Gastrocnemius medialis (tissue), 4 donors: ENCODE measurements at regions of chr1 and their contacts with region 1.

Region 1: GRCh38 chr1:167066333-167067122 is 23.6 kb downstream of the GPA33 start:
- DNase-seq: peak; percentile 56 to 68
- ATAC-seq: peak; percentile 85 to 96
- H3K4me3 ChIP-seq: peak overlapping the region; percentile 36 to 70 (median 42)
- H3K27ac ChIP-seq: no peak overlapping the region
- H3K4me1 ChIP-seq: peaks cover 0 to 5% of the 10 kb centered on the region in 2 donors
- H3K27me3 ChIP-seq: no peaks in the 10 kb centered on the region
- CTCF ChIP-seq: peak; percentile 93 to 98 (median 96)
- POLR2A ChIP-seq: no peak

Region 2: GRCh38 chr1:167121375-167122120 is 55.0 kb after region 1 on chr1:
- in situ Hi-C with region 1: loop called in 1 of 4 experiments (anchors 10 kb)
- intact Hi-C with region 1: no loop called
- DNase-seq: no peak
- ATAC-seq: no peak
- H3K4me3 ChIP-seq: peak overlapping the region in 1 of 4 donors; percentile 8
- H3K27ac ChIP-seq: peak overlapping the region; percentile 32 to 74 (median 53)
- H3K4me1 ChIP-seq: peaks cover 6 to 20% of the 10 kb centered on the region in 2 donors
- H3K27me3 ChIP-seq: no peaks in the 10 kb centered on the region
- CTCF ChIP-seq: no peak
- POLR2A ChIP-seq: no peak

Region 3: DNA sequence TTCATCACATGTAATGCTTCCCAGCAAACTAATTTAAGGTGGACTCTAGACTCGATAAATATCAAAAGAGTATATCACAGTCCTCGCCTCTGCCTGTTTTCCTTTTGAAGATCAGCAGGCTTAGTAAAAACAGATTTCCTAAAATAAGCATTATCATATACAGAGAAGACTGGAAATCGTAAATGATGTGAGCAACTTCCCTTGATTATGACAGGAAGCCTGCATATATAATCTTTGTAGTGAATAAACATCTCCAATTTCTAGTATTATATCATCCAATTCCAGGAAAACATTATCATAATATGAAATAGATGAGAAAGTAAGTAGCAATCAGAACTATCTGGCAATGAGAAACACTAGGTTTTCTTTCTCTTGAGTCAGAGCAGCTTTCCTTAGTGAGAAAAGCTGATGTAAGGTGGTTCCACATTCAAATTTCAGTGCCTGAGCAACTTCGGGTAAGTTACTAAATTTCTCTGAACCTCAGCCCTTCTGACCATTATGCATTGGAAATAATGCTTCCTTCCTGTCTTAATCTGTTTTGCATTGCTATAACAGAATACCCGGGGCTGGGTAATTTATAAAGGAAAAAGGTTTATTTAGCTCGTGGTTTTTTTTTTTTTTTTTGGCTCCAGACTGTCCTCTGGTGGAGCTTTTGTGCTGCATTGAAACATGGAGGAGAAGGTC is 141.6 kb after region 1 on chr1:
- in situ Hi-C with region 1: loop called (anchors 5 to 10 kb)
- intact Hi-C with region 1: no loop called
- DNase-seq: no peak
- ATAC-seq: peak in 1 of 2 donors; percentile 41
- H3K4me3 ChIP-seq: no peak overlapping the region
- H3K27ac ChIP-seq: no peak overlapping the region
- H3K4me1 ChIP-seq: no peaks in the 10 kb centered on the region
- H3K27me3 ChIP-seq: no peaks in the 10 kb centered on the region
- CTCF ChIP-seq: peak in 3 of 5 experiments; percentile 32 to 39 (median 39)
- POLR2A ChIP-seq: no peak

Region 4: GRCh38 chr1:167442124-167442848 is 375.8 kb after region 1 on chr1:
- in situ Hi-C with region 1: loop called (anchors 5 to 10 kb)
- intact Hi-C with region 1: loop called (anchors 1 kb)
- DNase-seq: peak; percentile 42 to 77
- ATAC-seq: peak; percentile 81 to 94
- H3K4me3 ChIP-seq: no peak overlapping the region
- H3K27ac ChIP-seq: no peak overlapping the region
- H3K4me1 ChIP-seq: peaks cover 0 to 12% of the 10 kb centered on the region in 2 donors
- H3K27me3 ChIP-seq: peaks cover 0 to 7% (median 0%) of the 10 kb centered on the region in 3 donors
- CTCF ChIP-seq: peak; percentile 74 to 91 (median 82)
- POLR2A ChIP-seq: no peak

Region 5: DNA sequence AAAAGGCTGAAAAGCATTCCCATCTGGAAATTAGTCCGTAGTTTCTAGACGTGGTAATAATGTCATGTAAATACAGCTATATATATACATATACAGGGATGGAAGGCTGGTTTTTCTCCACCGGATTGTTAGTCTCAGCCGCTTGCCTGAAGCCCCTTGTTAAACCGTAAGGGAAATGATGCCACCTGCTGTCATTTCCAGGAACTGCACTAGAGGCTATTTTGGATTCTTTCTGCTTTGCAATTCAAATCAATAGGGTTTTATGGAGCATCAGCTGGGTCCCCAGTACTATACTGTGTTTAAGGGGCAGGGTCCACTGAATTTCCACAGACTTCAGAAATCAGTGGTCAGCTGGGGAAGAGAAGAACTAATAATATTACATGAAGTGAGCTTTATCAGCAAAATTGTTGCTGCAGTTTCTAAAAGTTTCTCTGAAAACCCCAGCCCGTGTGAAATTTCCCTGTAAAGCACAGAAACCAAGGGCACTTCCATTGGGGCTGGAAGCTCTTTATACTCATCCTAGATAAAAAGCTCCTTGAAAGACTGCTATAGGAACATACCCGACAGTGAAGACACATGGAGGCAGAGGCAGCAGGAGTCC is 621.5 kb after region 1 on chr1:
- in situ Hi-C with region 1: loop called in 1 of 4 experiments (anchors 25 kb)
- intact Hi-C with region 1: no loop called
- DNase-seq: peak; percentile 51 to 68
- ATAC-seq: peak; percentile 38 to 39
- H3K4me3 ChIP-seq: no peak overlapping the region
- H3K27ac ChIP-seq: peak overlapping the region; percentile 82 to 92 (median 86)
- H3K4me1 ChIP-seq: peaks cover 46 to 61% of the 10 kb centered on the region in 2 donors
- H3K27me3 ChIP-seq: no peaks in the 10 kb centered on the region
- CTCF ChIP-seq: peak; percentile 91 to 96 (median 95)
- POLR2A ChIP-seq: no peak